ENCODE measurements at regions of chr4 and their contacts with region 1.

Region 1: GRCh38 chr4:86497980-86498862 is 95.9 kb upstream of the PTPN13 start:
- DNase-seq: no peak
- H3K4me3 ChIP-seq: no peak overlapping the region
- H3K27ac ChIP-seq: no peak overlapping the region
- H3K4me1 ChIP-seq: no peaks in the 10 kb centered on the region
- H3K27me3 ChIP-seq: no peaks in the 10 kb centered on the region
- CTCF ChIP-seq: peak in 3 of 4 experiments; percentile 48 to 76 (median 69)
- EP300 ChIP-seq: no peak
- POLR2A ChIP-seq: no peak

Region 2: DNA sequence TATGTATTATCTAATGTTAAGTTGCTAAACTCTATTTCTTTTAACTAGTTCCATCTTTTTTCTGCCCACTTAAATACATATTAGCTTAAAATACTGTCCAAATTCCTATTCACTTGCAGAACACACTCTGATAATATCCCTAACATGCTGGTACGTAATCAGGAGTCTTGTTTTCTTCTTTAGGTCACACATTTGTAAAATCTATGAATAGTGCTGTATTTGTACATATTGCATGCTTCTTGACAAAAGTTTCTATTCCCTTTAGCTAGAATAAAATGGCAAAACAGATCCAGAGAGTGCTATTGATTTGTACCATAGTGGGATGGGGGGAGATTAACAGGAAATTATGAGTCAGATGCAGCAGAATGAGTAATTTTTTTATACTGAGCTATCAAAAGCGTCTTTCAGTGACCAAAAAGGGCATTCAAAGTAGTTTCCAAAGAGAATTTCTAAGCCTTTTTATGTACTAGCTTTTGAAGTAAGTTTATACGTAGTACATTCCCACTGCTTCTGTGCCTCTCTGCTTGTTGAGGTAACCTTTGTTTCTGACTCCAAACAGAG is 222.4 kb after region 1 on chr4:
- intact Hi-C with region 1: loop called (anchors 10 kb)
- DNase-seq: no peak
- H3K4me3 ChIP-seq: no peak overlapping the region
- H3K27ac ChIP-seq: no peak overlapping the region
- H3K4me1 ChIP-seq: no peaks in the 10 kb centered on the region
- H3K27me3 ChIP-seq: no peaks in the 10 kb centered on the region
- CTCF ChIP-seq: no peak
- EP300 ChIP-seq: no peak
- POLR2A ChIP-seq: no peak

Region 3: DNA sequence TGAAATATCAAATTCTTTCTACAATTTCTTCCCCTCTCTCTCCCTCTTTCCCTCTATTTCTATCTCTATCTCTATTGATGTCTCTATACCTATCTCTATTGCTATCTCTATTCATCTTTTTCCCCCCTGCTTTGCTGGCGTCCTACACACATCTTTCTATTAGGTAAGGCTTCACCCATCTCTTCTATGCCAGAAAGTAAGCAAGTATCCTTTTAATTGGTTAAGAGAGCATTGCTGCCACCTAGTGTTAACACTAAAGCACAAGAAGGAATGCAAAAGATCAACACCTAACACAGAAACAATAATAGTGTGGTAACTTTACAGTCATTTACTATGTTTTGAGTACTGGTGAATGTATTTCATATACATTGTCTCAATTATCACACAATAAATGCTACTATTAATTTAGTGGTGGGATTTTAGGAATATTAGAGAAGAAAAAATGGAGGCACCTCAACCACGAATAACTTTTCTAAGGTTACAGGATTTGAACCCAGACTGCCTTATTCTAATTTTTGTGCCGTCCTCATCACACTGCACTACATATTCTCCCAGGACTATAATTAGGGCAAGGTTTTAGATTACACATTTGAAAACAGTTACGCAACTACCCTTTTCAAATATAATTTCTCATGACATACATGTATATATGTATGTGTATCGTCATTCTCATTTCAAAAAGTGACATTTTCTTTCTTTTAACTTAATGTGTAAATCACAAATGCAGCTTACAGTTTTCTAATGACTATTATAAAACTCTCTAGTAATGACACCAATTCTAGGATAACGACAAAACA is 397.7 kb after region 1 on chr4:
- intact Hi-C with region 1: loop called (anchors 1 kb)
- DNase-seq: no peak
- H3K4me3 ChIP-seq: no peak overlapping the region
- H3K27ac ChIP-seq: no peak overlapping the region
- H3K4me1 ChIP-seq: peaks cover 0 to 15% (median 7%) of the 10 kb centered on the region in 4 donors
- H3K27me3 ChIP-seq: no peaks in the 10 kb centered on the region
- CTCF ChIP-seq: peak; percentile 36 to 69 (median 62)
- EP300 ChIP-seq: no peak
- POLR2A ChIP-seq: no peak

Region 4: GRCh38 chr4:87451537-87451936 is 953.3 kb after region 1 on chr4:
- intact Hi-C with region 1: no loop called
- DNase-seq: no peak
- H3K4me3 ChIP-seq: no peak overlapping the region
- H3K27ac ChIP-seq: no peak overlapping the region
- H3K4me1 ChIP-seq: no peaks in the 10 kb centered on the region
- H3K27me3 ChIP-seq: no peaks in the 10 kb centered on the region
- CTCF ChIP-seq: no peak
- EP300 ChIP-seq: no peak
- POLR2A ChIP-seq: no peak